ENCODE measurements at regions of chr11 and their contacts with region 1.

Region 1: GRCh38 chr11:45365961-45366618 is 79.9 kb upstream of the SYT13 start:
- DNase-seq: no peak
- ATAC-seq: no peak
- H3K4me3 ChIP-seq: no peak overlapping the region
- H3K27ac ChIP-seq: no peak overlapping the region
- H3K4me1 ChIP-seq: peaks cover 0 to 5% (median 0%) of the 10 kb centered on the region in 3 donors
- H3K27me3 ChIP-seq: no peaks in the 10 kb centered on the region
- CTCF ChIP-seq: no peak

Region 2: GRCh38 chr11:45771566-45772448 is 405.7 kb after region 1 on chr11:
- intact Hi-C with region 1: loop called in 1 of 3 experiments (anchors 10 kb)
- DNase-seq: peak; percentile 76 to 95 (median 86)
- ATAC-seq: peak; percentile 96 to 99 (median 98)
- H3K4me3 ChIP-seq: peak overlapping the region; percentile 16 to 61 (median 40)
- H3K27ac ChIP-seq: peak overlapping the region in 2 of 4 donors; percentile 46 to 47
- H3K4me1 ChIP-seq: no peaks in the 10 kb centered on the region
- H3K27me3 ChIP-seq: no peaks in the 10 kb centered on the region
- CTCF ChIP-seq: peak; percentile 89 to 92 (median 90)

Measured in pancreas (tissue), 10 donors.